ENCODE measurements at regions of chr19 and their contacts with region 1.

Region 1: DNA sequence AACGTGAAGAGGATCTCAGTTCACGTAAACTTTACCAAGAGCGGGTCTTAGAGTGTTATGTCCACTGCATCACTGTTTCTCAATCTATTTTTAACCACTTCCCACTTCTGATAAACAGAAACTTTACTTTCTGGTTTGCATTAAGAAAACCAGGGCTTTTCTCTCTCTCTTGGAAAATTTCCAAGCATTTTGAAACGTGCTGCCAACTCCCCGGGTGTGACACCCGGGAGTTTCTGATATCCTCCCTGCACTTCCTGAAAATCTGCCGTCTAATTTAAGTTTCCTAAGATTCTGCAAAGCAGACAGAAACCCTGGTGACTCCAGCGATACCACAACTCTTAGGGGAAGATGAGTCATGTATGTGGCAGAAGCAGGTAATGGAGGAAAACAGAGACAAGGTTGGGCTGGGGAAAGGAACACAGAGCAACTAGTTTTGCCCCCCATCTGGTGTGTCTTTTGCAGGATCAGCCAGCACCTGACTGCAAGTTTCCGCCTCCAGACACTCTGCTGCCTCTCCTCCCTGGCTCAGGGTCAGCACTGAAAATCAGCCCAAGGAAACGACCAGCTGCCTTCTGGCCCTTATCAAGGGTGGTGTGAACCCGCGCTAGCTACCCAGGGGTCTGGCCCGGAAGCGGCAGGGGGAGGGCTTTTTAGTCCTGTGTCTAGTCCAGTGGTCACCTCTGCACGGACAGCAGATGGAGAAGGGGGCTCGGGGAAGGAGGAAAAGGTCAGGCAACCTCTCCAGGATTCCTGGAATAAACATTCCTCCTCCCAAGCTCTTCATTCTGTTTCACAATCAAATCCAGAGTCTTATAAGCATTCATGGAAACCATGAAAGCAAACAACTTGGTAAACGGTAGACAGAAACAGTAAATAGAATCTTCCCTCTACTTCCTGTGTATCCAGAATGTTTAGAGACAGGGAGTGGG is 11.3 kb upstream of the FFAR2 start:
- DNase-seq: no peak
- H3K4me3 Mint-ChIP-seq: peak overlapping the region; percentile 42
- H3K27ac Mint-ChIP-seq: peak overlapping the region; percentile 44
- H3K4me1 Mint-ChIP-seq: peaks cover 20% of the 10 kb centered on the region
- H3K27me3 Mint-ChIP-seq: peaks cover 26% of the 10 kb centered on the region

Region 2: GRCh38 chr19:35066691-35067563 is 369.8 kb before region 1 on chr19:
- intact Hi-C with region 1: no loop called
- DNase-seq: peak; percentile 75
- H3K4me3 Mint-ChIP-seq: no peak overlapping the region
- H3K27ac Mint-ChIP-seq: peak overlapping the region; percentile 27
- H3K4me1 Mint-ChIP-seq: peaks cover 10% of the 10 kb centered on the region
- H3K27me3 Mint-ChIP-seq: no peaks in the 10 kb centered on the region

Region 3: GRCh38 chr19:35462476-35462953 is 25.8 kb after region 1 on chr19:
- intact Hi-C with region 1: loop called (anchors 2 kb)
- DNase-seq: peak; percentile 60
- H3K4me3 Mint-ChIP-seq: peak overlapping the region; percentile 60
- H3K27ac Mint-ChIP-seq: peak overlapping the region; percentile 88
- H3K4me1 Mint-ChIP-seq: peaks cover 45% of the 10 kb centered on the region
- H3K27me3 Mint-ChIP-seq: peaks cover 4% of the 10 kb centered on the region

Measured in activated T-helper 2 cell treated with anti-CD3 and anti-CD28 coated beads, Interferon-gamma antibody, Interleukin-2, Interleukin-4, amounts not matched to agents 10 μg/mL and 5 μg/mL and 100 μg/mL, durations not matched to agents 14 hours and 24 hours and 36 hours (primary cell).